ENCODE measurements at regions of chr17 and their contacts with region 1.

Region 1: DNA sequence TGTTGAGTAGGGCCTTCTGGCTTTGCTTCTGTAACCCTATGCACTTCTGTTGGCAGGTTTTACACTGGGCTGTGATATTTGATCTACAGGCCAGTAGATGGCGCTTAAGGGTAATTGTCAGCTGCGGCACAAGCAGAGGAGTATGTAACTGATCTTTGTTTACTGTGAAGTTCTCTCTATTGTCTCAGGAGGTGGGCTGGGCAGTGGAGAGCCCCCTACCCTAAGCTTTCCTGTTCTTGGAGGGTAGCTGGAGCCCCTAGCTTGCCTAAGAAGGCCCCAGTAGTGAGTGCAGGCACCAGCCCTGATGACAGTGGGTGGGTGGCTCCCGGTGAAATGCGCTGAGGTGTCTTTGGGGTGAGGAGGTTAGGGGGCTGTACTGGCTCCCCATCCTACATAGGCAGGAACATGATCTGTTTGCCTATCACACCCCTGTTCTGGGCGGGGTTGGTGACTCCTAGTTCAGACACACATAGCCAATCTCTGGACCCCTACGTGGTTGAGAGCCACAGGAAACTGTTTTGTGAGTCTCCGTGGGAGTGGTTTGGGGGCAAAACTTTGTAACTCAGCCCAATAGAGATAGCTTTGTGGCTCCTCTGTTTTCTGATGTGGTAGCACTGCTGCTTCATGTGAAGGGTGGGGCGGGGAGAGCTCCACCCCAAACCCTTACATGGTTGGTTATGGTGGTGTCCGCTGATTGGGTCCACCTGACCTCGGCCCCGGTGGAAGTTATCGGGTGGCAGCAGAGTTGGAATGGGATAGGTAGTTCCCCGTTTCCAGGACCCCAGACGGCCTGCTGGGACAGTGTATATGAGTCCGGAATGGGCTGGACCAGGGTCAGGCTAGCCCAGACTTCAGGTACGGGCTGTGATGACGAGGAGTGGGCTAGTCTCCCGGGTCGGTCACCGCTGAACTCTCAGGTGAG is 60.4 kb downstream of the SLFN11 start:
- DNase-seq: peak; percentile 44 to 68 (median 49)
- ATAC-seq: peak; percentile 80 to 90 (median 87)
- H3K4me3 ChIP-seq: peak overlapping the region in 11 of 12 donors; percentile 19 to 63 (median 49)
- H3K27ac ChIP-seq: peak overlapping the region; percentile 49 to 87 (median 78)
- H3K4me1 ChIP-seq: peaks cover 0 to 36% (median 31%) of the 10 kb centered on the region in 12 donors
- H3K27me3 ChIP-seq: no peaks in the 10 kb centered on the region
- CTCF ChIP-seq: peak; percentile 66 to 87 (median 82)
- POLR2A ChIP-seq: peak in 1 of 2 donors; percentile 12

Region 2: GRCh38 chr17:35242805-35243560 is 70.1 kb before region 1 on chr17 and contains the start of gene SLFN5:
- intact Hi-C with region 1: loop called in 1 of 10 experiments (anchors 10 kb)
- DNase-seq: peak; percentile 94 to 96 (median 94)
- ATAC-seq: peak; percentile 96 to 98 (median 97)
- H3K4me3 ChIP-seq: peak within 1 kb of the TSS; percentile 50 to 95 (median 74)
- H3K27ac ChIP-seq: peak within 1 kb of the TSS; percentile 84 to 97 (median 94)
- H3K4me1 ChIP-seq: peaks cover 0 to 51% (median 19%) of the 10 kb centered on the region in 12 donors
- H3K27me3 ChIP-seq: no peaks in the 10 kb centered on the region
- CTCF ChIP-seq: no peak
- POLR2A ChIP-seq: peak in 1 of 2 donors; percentile 93
- total RNA-seq, gene SLFN5: 12.4 to 41.4 (median 15.0) TPM

Region 3: GRCh38 chr17:35265566-35266141 is 47.4 kb before region 1 on chr17:
- intact Hi-C with region 1: no loop called
- DNase-seq: no peak
- ATAC-seq: no peak
- H3K4me3 ChIP-seq: no peak overlapping the region
- H3K27ac ChIP-seq: no peak overlapping the region
- H3K4me1 ChIP-seq: peaks cover 0 to 8% (median 0%) of the 10 kb centered on the region in 12 donors
- H3K27me3 ChIP-seq: no peaks in the 10 kb centered on the region
- CTCF ChIP-seq: no peak
- POLR2A ChIP-seq: no peak

Region 4: DNA sequence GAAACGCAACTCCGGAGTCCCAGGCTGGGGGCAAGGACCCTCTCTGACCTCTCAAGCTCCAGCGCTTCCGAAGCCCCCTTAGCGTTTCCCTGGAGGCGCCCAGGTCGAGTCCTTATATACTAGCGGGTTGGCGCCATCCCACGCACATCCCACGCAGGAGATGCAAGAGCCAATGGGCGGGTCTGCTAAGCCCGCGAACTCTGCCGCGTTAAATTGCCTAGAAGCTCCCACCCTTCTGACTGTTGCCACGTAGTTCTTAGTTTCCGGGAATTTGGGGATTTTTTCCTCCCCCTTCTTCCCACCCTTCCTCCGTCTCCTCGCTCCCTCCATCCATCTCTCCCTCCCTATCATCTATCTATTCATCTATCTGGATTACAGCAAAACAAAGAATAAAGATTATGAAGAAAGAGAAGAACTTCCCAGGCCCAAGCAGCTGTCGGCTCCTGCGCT is 60.5 kb after region 1 on chr17 and contains the start of gene SLFN11:
- intact Hi-C with region 1: loop called in 6 of 10 experiments (anchors 2 to 10 kb)
- DNase-seq: peak; percentile 90 to 92 (median 91)
- ATAC-seq: peak; percentile 91 to 98 (median 93)
- H3K4me3 ChIP-seq: peak within 1 kb of the TSS; percentile 27 to 82 (median 72)
- H3K27ac ChIP-seq: peak within 1 kb of the TSS; percentile 92 to 98 (median 95)
- H3K4me1 ChIP-seq: peaks cover 0 to 65% (median 13%) of the 10 kb centered on the region in 12 donors
- H3K27me3 ChIP-seq: peaks cover 0 to 20% (median 0%) of the 10 kb centered on the region in 9 donors
- CTCF ChIP-seq: no peak
- POLR2A ChIP-seq: peak; percentile 84 to 98
- total RNA-seq, gene SLFN11: 15.3 to 46.0 (median 17.5) TPM

Region 5: DNA sequence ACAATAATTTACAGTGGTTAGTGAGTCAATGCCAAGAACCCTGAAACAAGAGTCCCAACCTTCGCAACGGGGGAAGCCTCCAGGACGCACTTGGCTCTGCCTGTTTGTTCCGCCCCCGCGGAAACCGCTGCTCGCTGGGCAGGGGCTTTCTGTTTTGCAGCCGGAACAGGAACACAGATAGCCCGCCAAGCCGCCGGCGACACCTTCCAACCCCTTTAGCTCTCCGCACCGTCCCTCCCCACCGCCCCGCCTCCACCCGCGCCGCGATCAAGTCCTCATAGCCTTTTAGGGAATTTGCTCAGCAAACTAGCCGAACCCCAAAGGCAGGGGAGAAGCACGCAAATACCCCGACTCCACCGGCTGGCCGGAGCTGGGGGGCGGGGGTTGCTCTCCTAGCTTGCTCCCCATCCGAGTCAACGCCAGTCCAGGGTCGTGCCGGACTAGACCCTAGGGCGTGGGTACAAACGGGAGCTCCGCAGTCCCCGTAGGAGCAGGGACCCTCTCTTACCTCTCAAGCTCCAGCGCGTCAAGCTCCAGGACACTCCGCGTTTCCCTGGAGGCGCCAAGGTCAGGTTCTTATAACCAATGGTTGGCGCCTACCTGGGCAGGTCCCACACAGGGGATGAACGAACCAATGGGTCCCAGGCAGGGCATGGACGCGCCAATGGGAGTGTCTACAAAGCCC is 135.3 kb after region 1 on chr17 and contains the start of gene SLFN13:
- intact Hi-C with region 1: loop called in 1 of 10 experiments (anchors 10 kb)
- DNase-seq: peak; percentile 87 to 91 (median 88)
- ATAC-seq: peak; percentile 80 to 95 (median 91)
- H3K4me3 ChIP-seq: peak within 1 kb of the TSS; percentile 1 to 79 (median 57)
- H3K27ac ChIP-seq: peak within 1 kb of the TSS in 11 of 12 donors; percentile 35 to 86 (median 65)
- H3K4me1 ChIP-seq: peaks cover 0 to 24% (median 6%) of the 10 kb centered on the region in 12 donors
- H3K27me3 ChIP-seq: peaks cover 0 to 30% (median 6%) of the 10 kb centered on the region in 9 donors
- CTCF ChIP-seq: no peak
- POLR2A ChIP-seq: no peak
- total RNA-seq, gene SLFN13: 0.94 to 14.8 (median 4.5) TPM

Region 6: DNA sequence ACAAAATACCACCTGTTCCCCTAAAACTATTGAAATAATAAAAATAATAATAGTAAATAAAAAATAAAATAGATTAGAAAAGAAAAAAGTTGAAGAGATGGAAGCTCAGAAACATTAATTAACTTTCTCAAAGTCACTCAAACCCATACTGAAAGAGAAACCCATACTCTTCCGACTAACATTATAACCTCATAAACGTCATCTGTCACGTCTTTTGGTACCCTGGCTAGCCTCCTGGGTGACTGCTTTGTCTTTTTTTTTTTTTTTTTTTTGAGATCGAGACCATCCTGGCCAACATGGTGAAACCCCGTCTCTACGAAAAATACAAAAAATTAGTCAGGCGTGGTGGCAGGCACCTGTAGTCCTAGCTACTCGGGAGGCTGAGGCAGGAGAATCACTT is 216.8 kb after region 1 on chr17:
- intact Hi-C with region 1: loop called in 6 of 10 experiments (anchors 1 to 2 kb)
- DNase-seq: no peak
- ATAC-seq: no peak
- H3K4me3 ChIP-seq: no peak overlapping the region
- H3K27ac ChIP-seq: no peak overlapping the region
- H3K4me1 ChIP-seq: peaks cover 0 to 3% (median 0%) of the 10 kb centered on the region in 12 donors
- H3K27me3 ChIP-seq: no peaks in the 10 kb centered on the region
- CTCF ChIP-seq: no peak
- POLR2A ChIP-seq: no peak

Region 7: DNA sequence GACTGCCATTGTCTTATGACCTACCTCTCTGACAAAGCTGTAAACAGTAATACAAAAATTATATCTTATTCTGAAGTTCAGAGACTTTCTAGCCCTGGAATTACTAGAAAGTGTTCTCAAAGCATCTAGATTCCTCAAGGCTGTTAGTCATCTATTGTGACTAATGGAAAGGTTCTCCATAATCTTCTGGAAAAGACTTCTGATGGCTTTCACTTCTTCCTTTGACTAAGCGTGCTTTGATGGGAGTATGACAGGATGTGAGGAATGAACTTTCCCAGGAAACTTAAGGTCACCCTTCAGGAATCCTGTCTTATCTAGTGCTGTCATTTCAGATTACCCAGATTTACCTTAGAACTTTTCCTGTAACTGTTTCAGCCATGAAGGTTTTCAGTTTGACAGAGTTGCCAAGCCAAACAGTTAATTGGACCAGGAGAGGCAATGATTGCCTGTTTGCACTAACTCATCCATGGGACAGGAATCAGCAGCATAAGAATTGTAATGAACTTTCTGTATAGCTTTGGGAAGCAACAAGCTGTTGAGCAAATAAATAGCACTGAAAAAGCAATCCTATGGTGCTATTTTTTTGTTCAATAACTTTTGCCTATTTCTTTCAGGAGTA is 317.6 kb after region 1 on chr17:
- intact Hi-C with region 1: no loop called
- DNase-seq: no peak
- ATAC-seq: peak in 3 of 4 donors; percentile 31 to 49 (median 37)
- H3K4me3 ChIP-seq: no peak overlapping the region
- H3K27ac ChIP-seq: no peak overlapping the region
- H3K4me1 ChIP-seq: peaks cover 0 to 5% (median 0%) of the 10 kb centered on the region in 12 donors
- H3K27me3 ChIP-seq: no peaks in the 10 kb centered on the region
- CTCF ChIP-seq: no peak
- POLR2A ChIP-seq: no peak

Region 8: GRCh38 chr17:35747540-35748017 is 434.5 kb after region 1 on chr17:
- intact Hi-C with region 1: loop called in 4 of 10 experiments (anchors 5 to 10 kb)
- DNase-seq: peak in 4 of 5 donors; percentile 64 to 71 (median 68)
- ATAC-seq: peak; percentile 67 to 89 (median 80)
- H3K4me3 ChIP-seq: no peak overlapping the region
- H3K27ac ChIP-seq: no peak overlapping the region
- H3K4me1 ChIP-seq: peaks cover 0 to 9% (median 4%) of the 10 kb centered on the region in 12 donors
- H3K27me3 ChIP-seq: peaks cover 0 to 46% (median 20%) of the 10 kb centered on the region in 9 donors
- CTCF ChIP-seq: peak; percentile 75 to 91 (median 87)
- POLR2A ChIP-seq: no peak

Measured in heart left ventricle (tissue), 16 donors.